HCT116 (cell line): ENCODE measurements at regions of chr1 and their contacts with region 1.

Region 1: DNA sequence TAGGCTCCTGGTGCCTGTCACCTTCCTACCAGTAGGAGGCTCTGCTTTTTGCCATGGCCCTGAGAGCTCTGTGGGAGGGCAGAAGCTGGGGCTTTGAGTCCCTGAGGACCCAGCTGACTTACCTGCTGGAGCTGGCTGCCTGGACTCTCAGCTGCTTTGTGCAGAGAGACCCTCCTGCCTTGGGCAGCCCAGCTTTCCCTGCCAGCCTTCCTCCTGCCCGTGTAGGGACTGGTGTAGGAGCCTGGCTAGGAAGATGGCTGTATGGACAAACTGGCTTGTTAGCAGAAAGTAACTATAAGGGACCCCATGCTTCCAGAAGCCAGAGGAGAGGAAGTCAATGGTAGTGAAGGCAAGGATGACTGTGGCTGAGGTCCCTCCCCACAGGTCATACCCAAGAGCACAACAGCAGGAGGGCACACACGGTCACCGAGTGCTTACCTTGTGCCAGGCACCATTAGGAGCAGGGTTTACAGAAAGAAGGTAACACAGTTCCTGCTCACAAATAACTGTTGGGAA is 9.7 kb upstream of the CELSR2 start:
- DNase-seq: no peak
- ATAC-seq: peak; percentile 87
- H3K4me3 ChIP-seq: no peak overlapping the region
- H3K27ac ChIP-seq: no peak overlapping the region
- H3K4me1 ChIP-seq: peaks cover 6 to 18% of the 10 kb centered on the region in 2 experiments; a peak in 2 of 4 replicates
- H3K27me3 ChIP-seq: no peaks in the 10 kb centered on the region
- CTCF ChIP-seq: peak; percentile 37 to 74 (median 64); a peak in 5 of 6 replicates
- POLR2A ChIP-seq: no peak
- RAD21 ChIP-seq: no peak

Region 2: GRCh38 chr1:108780937-108781574 is 458.6 kb before region 1 on chr1:
- CTCF ChIA-PET with region 1: no interaction called
- POLR2A ChIA-PET with region 1: no interaction called
- RAD21 ChIA-PET with region 1: no interaction called
- intact Hi-C with region 1: no loop called
- DNase-seq: no peak
- ATAC-seq: no peak
- H3K4me3 ChIP-seq: no peak overlapping the region
- H3K27ac ChIP-seq: no peak overlapping the region
- H3K4me1 ChIP-seq: no peaks in the 10 kb centered on the region
- H3K27me3 ChIP-seq: no peaks in the 10 kb centered on the region
- CTCF ChIP-seq: no peak
- POLR2A ChIP-seq: no peak
- RAD21 ChIP-seq: no peak

Region 3: GRCh38 chr1:108913105-108913948 is 326.3 kb before region 1 on chr1:
- CTCF ChIA-PET with region 1: no interaction called
- POLR2A ChIA-PET with region 1: no interaction called
- RAD21 ChIA-PET with region 1: no interaction called
- intact Hi-C with region 1: no loop called
- DNase-seq: no peak
- ATAC-seq: no peak
- H3K4me3 ChIP-seq: no peak overlapping the region
- H3K27ac ChIP-seq: no peak overlapping the region
- H3K4me1 ChIP-seq: no peaks in the 10 kb centered on the region
- H3K27me3 ChIP-seq: no peaks in the 10 kb centered on the region
- CTCF ChIP-seq: no peak
- POLR2A ChIP-seq: no peak
- RAD21 ChIP-seq: no peak

Region 4: GRCh38 chr1:109181105-109181806 is 58.4 kb before region 1 on chr1:
- CTCF ChIA-PET with region 1: no interaction called
- POLR2A ChIA-PET with region 1: no interaction called
- RAD21 ChIA-PET with region 1: no interaction called
- intact Hi-C with region 1: no loop called
- DNase-seq: no peak
- ATAC-seq: no peak
- H3K4me3 ChIP-seq: no peak overlapping the region
- H3K27ac ChIP-seq: no peak overlapping the region
- H3K4me1 ChIP-seq: peaks cover 15 to 16% of the 10 kb centered on the region in 2 experiments
- H3K27me3 ChIP-seq: no peaks in the 10 kb centered on the region
- CTCF ChIP-seq: no peak
- POLR2A ChIP-seq: no peak
- RAD21 ChIP-seq: no peak

Region 5: DNA sequence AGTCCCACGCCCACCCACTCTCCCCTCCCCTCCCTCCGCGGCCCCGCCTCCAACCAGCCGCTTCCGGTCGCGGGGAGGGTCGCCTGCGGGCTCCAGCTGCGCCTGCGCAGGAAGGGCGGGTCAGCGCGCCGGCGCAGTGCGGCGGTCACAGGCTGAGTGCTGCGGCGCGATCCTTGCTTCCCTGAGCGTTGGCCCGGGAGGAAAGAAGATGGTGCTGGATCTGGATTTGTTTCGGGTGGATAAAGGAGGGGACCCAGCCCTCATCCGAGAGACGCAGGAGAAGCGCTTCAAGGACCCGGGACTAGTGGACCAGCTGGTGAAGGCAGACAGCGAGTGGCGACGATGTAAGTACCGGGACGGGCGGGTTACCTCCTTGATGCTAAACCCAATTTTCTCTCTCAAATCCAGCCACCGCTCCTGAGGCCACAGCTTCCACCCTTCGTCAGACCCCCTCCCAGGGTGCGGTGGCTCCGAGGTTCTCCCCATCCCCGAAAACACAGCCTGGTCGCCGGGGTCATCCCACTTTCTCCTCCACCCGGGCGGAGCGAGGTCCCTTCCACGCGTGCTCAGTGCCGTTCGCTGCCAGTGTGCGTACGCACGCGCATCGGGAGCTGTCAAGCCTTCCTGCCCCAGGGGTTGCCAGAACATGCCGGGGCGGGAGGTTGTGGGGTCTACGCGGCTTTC is 25.7 kb before region 1 on chr1 and contains the start of gene SARS1:
- CTCF ChIA-PET with region 1: interaction called, 12 read pairs
- POLR2A ChIA-PET with region 1: no interaction called
- RAD21 ChIA-PET with region 1: no interaction called
- intact Hi-C with region 1: no loop called
- DNase-seq: peak; percentile 57
- ATAC-seq: peak; percentile 93
- H3K4me3 ChIP-seq: peak within 1 kb of the TSS; percentile 88 to 96
- H3K27ac ChIP-seq: peak within 1 kb of the TSS; percentile 72
- H3K4me1 ChIP-seq: peaks cover 9 to 31% of the 10 kb centered on the region in 2 experiments
- H3K27me3 ChIP-seq: no peaks in the 10 kb centered on the region
- CTCF ChIP-seq: no peak
- POLR2A ChIP-seq: no peak
- RAD21 ChIP-seq: no peak
- total RNA-seq, gene SARS1: 206 TPM

Region 6: DNA sequence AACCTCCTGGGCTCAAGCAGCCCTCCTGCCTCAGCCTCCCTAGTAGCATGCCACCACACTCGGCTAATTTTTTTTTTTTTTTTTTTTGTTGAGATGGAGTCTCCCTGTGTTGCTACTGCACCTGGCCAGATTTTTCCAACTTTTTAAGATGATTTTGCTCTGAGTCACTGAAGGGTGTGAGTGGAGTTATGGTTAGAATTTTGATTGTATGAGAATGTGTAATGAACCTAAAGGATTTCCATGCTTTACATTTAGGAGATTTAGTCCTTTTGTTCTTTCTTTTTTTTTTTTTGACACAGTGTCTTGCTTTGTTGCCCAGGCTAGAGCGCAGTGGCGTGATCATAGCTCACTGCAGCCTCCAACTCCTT is 13.6 kb before region 1 on chr1:
- CTCF ChIA-PET with region 1: interaction called, 10 read pairs
- POLR2A ChIA-PET with region 1: interaction called, 3 read pairs
- RAD21 ChIA-PET with region 1: no interaction called
- intact Hi-C with region 1: no loop called
- DNase-seq: no peak
- ATAC-seq: no peak
- H3K4me3 ChIP-seq: no peak overlapping the region
- H3K27ac ChIP-seq: no peak overlapping the region
- H3K4me1 ChIP-seq: peaks cover 0 to 9% of the 10 kb centered on the region in 2 experiments; a peak in 1 of 4 replicates
- H3K27me3 ChIP-seq: no peaks in the 10 kb centered on the region
- CTCF ChIP-seq: no peak
- POLR2A ChIP-seq: no peak
- RAD21 ChIP-seq: no peak

Region 7: GRCh38 chr1:110477041-110477440 is 1237.4 kb after region 1 on chr1:
- CTCF ChIA-PET with region 1: no interaction called
- POLR2A ChIA-PET with region 1: no interaction called
- RAD21 ChIA-PET with region 1: no interaction called
- intact Hi-C with region 1: no loop called
- DNase-seq: peak; percentile 90
- ATAC-seq: peak; percentile 75
- H3K4me3 ChIP-seq: peak overlapping the region in 1 of 2 experiments; percentile 34; a peak in 2 of 4 replicates
- H3K27ac ChIP-seq: peak overlapping the region; percentile 72
- H3K4me1 ChIP-seq: peaks cover 23 to 40% of the 10 kb centered on the region in 2 experiments
- H3K27me3 ChIP-seq: no peaks in the 10 kb centered on the region
- CTCF ChIP-seq: no peak
- POLR2A ChIP-seq: no peak
- RAD21 ChIP-seq: no peak